Calu3 (cell line): ENCODE measurements at regions of chr14 and their contacts with region 1.

Region 1: DNA sequence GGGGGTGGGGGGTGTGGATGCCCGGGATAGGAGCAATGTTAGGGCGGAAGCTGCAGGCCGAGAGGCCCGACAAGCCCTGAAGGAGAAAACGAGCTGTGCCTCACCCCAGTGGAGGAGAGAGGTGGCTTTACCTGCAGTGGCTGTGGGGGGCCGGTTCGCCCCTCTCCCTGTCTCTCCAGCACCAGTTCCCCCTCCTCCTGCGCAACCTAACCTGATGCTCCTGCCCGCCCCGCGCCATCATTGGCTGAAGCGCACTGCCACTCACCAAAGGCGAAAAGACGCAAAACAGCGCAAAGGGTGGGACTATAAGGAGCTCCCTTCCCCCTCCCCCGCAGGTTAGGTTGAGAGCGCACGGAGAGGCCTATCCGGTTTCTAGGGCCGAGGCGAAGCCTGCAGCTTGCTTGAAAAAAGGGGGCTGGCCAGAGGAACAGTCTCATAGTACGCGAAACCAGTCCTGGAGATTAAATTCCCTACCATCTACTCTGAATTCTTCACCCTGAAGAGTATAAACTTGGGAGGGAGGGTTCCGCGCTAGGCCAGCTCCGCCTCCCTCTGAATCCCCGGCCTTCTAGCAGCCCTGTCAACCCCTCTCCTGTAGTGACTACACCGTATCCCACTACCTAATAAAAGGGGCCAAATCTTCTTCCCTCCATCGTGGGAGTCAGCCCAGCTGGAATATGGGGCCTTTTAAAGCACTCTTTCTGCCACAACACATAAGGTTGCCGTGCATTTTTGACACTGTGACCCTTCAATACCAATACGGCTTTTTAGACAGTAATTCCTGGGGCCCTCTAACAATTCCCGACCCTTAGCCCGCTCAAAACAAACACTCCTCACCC is 18.6 kb downstream of the CHD8 start:
- DNase-seq: peak; percentile 98
- H3K4me3 Mint-ChIP-seq: peak overlapping the region; percentile 82
- H3K27ac Mint-ChIP-seq: peak overlapping the region; percentile 79
- H3K4me1 Mint-ChIP-seq: peaks cover 19% of the 10 kb centered on the region
- H3K27me3 Mint-ChIP-seq: no peaks in the 10 kb centered on the region
- CTCF ChIP-seq: no peak

Region 2: GRCh38 chr14:21455911-21456667 is 18.8 kb after region 1 on chr14 and contains the start of gene CHD8:
- CTCF ChIA-PET with region 1: interaction called, 31 read pairs
- intact Hi-C with region 1: no loop called
- DNase-seq: peak; percentile 99
- H3K4me3 Mint-ChIP-seq: peak within 1 kb of the TSS; percentile 86
- H3K27ac Mint-ChIP-seq: peak within 1 kb of the TSS; percentile 83
- H3K4me1 Mint-ChIP-seq: peaks cover 23% of the 10 kb centered on the region
- H3K27me3 Mint-ChIP-seq: no peaks in the 10 kb centered on the region
- CTCF ChIP-seq: peak; percentile 29
- total RNA-seq, gene CHD8: 93.1 and 100 TPM in 2 replicates

Region 3: GRCh38 chr14:21543521-21543960 is 106.3 kb after region 1 on chr14:
- CTCF ChIA-PET with region 1: no interaction called
- intact Hi-C with region 1: no loop called
- DNase-seq: no peak
- H3K4me3 Mint-ChIP-seq: no peak overlapping the region
- H3K27ac Mint-ChIP-seq: no peak overlapping the region
- H3K4me1 Mint-ChIP-seq: peaks cover 12% of the 10 kb centered on the region
- H3K27me3 Mint-ChIP-seq: peaks cover 15% of the 10 kb centered on the region
- CTCF ChIP-seq: no peak